GM23248 (cell line): ENCODE measurements at regions of chr2 and their contacts with region 1.

Region 1: DNA sequence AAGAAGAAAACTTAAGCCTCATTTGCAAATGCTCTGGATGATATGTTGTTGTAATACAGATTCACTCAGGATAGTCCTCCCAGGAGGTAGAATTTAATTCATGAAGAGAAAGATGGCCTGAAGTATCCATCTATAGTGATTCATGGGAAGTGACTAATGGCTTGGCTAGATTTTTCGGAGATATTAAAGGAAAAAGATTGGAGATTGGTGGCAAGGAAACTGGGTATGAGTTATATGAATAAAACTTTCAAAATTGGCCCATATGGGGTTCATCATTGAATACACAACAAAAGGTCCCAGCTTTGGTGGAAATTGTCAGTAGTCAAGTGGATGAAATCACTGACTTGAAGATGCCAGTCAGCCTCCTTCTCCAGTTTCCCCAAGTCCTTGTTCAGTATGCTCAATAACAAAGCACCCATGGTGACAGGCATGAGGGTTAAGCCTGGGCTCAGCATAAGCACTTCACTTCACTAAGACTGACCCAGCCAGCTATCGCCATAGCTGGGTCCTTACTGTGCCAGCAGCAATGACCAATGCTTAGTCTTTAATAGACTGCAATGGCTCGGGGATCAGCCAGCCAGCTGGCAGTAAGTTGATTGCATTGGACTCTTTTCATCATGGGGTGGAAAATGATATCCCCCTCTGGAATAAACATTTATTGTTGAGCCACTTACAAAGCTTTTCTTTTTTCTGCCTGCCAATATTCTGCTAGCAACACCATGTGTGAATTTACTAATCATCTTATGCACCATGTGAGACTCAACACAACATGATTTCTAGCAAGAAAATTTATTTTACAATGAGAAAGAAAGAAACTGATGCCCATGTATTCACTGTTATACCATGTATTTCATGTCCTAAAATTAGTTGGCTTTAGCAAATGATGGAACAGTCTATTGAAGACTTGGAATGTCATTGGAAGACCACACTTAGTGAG is 176.6 kb upstream of the TACR1 start:
- DNase-seq: peak; percentile 67
- H3K4me3 ChIP-seq: no peak overlapping the region
- H3K27ac ChIP-seq: no peak overlapping the region
- H3K4me1 ChIP-seq: peaks cover 20% of the 10 kb centered on the region
- H3K27me3 ChIP-seq: no peaks in the 10 kb centered on the region

Region 2: GRCh38 chr2:74690571-74690970 is 685.3 kb before region 1 on chr2:
- in situ Hi-C with region 1: loop called (anchors 25 kb)
- DNase-seq: peak; percentile 82
- H3K4me3 ChIP-seq: no peak overlapping the region
- H3K27ac ChIP-seq: no peak overlapping the region
- H3K4me1 ChIP-seq: no peaks in the 10 kb centered on the region
- H3K27me3 ChIP-seq: no peaks in the 10 kb centered on the region

Region 3: DNA sequence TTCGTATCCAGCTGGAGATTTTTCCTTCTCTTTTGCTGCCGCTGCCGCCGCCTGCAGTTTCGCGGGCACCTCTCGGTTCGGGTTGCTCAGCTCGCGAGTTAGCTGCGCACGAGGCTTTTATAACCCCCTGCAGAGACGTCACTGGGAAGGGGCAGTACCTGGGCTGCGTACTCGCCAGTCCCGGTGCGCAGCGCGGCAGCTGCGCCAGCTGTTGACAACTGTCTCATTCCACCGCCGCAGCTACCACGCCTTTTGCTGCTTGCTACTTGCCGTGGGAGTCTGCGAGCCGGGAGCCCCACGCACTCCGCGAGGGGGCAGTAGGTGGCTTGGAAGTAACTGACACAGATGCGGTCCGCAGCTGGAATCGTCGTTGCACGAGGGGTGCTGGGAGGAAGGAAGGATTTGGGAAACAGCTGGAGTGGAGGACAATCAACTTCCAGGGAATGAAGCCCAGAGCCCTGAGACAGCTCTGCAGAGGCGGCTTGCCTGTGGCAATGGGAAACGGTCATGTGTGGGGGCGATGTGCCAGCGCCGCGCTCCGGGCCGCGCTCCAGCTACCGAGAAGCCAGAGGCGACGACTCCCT is 176.4 kb before region 1 on chr2 and contains the start of gene TACR1:
- in situ Hi-C with region 1: loop called (anchors 25 kb)
- DNase-seq: peak; percentile 85
- H3K4me3 ChIP-seq: peak within 1 kb of the TSS; percentile 73
- H3K27ac ChIP-seq: no peak within 1 kb of the TSS
- H3K4me1 ChIP-seq: 0 out of 2 replicates have a peak, but pooled peaks cover 3% of the 10 kb centered on the region
- H3K27me3 ChIP-seq: peaks cover 40% of the 10 kb centered on the region
- total RNA-seq, gene TACR1: 0.11 and 0.13 TPM in 2 replicates

Region 4: DNA sequence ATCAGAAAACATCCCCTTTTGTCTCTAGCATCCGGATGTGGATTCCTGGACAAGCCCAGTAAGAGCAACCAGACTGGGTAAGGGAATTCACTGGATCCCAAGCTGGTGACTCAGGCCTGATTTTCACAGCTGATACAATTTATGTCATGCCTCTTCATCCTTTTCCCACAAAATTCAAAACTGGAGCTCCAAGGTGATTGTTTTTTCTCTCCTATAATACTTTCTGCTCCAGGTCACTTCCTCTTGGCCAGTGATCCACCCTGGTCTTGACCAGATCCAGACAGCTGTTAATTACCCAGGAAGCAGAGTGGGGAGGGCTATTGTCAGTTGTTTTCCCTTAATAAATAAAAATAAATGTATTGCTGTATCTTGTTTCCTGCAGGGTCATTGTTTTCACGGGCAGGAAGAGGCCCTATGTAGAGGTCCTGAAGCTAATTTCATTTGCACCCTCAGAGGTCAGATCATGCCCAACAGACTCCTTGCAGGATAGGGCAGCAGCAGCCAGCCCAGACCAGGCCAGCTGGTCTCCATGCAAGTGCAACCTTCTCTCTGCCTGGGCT is 127.2 kb after region 1 on chr2:
- in situ Hi-C with region 1: no loop called
- DNase-seq: peak; percentile 85
- H3K4me3 ChIP-seq: no peak overlapping the region
- H3K27ac ChIP-seq: peak overlapping the region; percentile 55
- H3K4me1 ChIP-seq: peaks cover 46% of the 10 kb centered on the region
- H3K27me3 ChIP-seq: no peaks in the 10 kb centered on the region